Right cardiac atrium (tissue), 5 donors: ENCODE measurements at regions of chr9 and their contacts with region 1.

Region 1: DNA sequence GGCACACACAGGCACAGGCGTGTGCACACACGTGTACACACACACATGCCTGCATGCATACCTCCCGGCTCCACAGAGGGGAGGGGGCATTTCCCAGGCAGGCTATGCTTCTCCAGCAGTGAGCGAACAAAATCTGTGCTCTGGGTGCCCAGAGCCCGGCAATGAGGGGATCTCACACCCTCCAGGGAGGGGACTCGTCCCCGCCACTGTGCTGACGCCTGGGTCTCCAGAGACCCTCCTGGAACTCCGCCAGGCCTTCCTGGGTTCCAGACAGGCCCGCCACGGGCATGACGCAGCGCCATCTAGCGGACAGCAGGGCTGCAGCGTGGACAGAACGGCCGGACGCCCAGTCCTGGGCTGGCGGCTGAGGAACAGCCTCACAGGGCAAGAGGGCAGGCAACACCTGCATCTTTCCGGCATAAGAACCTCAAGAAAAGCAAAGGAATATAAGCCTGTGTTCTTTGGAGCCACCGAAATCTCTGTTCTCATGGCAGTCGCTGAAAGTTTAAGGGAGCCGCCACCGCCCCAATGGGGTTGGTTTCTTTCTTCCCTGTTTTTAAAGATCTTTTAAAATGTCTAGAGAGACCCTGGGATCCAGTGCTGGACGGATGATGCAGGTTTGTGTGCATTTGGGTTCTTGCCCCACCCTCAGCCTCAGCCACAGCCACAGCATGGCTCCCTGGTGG is 135.6 kb upstream of the PPP1R26 start:
- DNase-seq: peak; percentile 74 to 92 (median 90)
- ATAC-seq: peak; percentile 61 to 68
- H3K4me3 ChIP-seq: no peak overlapping the region
- H3K27ac ChIP-seq: no peak overlapping the region
- H3K4me1 ChIP-seq: no peaks in the 10 kb centered on the region
- H3K27me3 ChIP-seq: no peaks in the 10 kb centered on the region

Region 2: DNA sequence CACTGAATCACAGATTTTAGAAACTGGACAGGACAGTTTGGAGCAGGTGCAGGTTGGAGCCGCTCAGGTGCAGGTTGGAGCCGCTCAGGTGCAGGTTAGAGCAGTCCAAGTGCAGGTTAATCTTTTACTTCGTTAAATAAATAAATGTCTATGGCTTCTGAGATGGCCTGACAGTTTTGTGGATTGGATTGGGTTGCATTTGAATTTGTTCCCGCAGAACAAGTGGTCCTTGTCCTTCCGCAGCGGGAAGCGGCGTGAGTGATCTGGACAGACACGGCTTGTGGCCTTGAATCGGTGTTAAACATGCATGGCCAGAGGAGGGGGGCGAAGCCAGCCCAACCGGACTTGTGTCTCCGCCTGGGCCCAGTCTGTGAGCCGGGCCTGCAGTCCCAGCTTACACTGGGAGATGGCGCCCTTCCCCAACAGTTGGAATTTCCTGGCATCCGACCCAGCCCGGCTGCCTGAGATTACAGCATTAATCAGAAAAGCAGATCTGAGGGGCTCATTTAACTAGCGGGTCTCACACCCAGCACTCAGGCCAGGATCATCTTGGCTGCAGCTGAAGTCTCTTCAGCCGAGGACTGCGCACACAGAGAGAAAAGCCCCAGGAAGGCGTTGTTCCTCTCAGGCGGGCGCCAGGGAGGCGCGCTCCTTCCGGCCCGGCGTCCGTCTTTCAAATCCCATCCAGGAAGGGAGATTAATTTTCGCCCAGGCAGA is 258.0 kb before region 1 on chr9:
- intact Hi-C with region 1: loop called (anchors 2 to 5 kb)
- DNase-seq: peak; percentile 76 to 93 (median 90)
- ATAC-seq: peak; percentile 71 to 72
- H3K4me3 ChIP-seq: peak overlapping the region; percentile 30
- H3K27ac ChIP-seq: no peak overlapping the region
- H3K4me1 ChIP-seq: no peaks in the 10 kb centered on the region
- H3K27me3 ChIP-seq: no peaks in the 10 kb centered on the region